Activated CD4-positive, alpha-beta T cell treated with anti-CD3 and anti-CD28 coated beads for 36 hours (primary cell): ENCODE measurements at regions of chr1 and their contacts with region 1.

Region 1: GRCh38 chr1:74733604-74734484 is 892 bp downstream of the TYW3 start:
- DNase-seq: peak; percentile 60
- ATAC-seq: peak; percentile 65
- H3K4me3 Mint-ChIP-seq: peak overlapping the region; percentile 95
- H3K27ac Mint-ChIP-seq: peak overlapping the region; percentile 99
- H3K4me1 Mint-ChIP-seq: peaks cover 47% of the 10 kb centered on the region
- H3K27me3 Mint-ChIP-seq: no peaks in the 10 kb centered on the region

Region 2: GRCh38 chr1:74197657-74198552 is 535.9 kb before region 1 on chr1 and contains the starts of genes FPGT and LRRIQ3:
- CTCF ChIA-PET with region 1: no interaction called
- POLR2A ChIA-PET with region 1: no interaction called
- intact Hi-C with region 1: loop called (anchors 2 kb)
- DNase-seq: peak; percentile 97
- ATAC-seq: peak; percentile 96
- H3K4me3 Mint-ChIP-seq: peak within 1 kb of the TSS; percentile 85
- H3K27ac Mint-ChIP-seq: peak within 1 kb of the TSS; percentile 95
- H3K4me1 Mint-ChIP-seq: peaks cover 15% of the 10 kb centered on the region
- H3K27me3 Mint-ChIP-seq: no peaks in the 10 kb centered on the region
- total RNA-seq, gene FPGT: 12.5 to 13.9 TPM
- total RNA-seq, gene LRRIQ3: 1.9 to 2.7 TPM

Region 3: GRCh38 chr1:74712881-74713280 is 21.0 kb before region 1 on chr1:
- CTCF ChIA-PET with region 1: interaction called, 12 read pairs
- POLR2A ChIA-PET with region 1: no interaction called
- intact Hi-C with region 1: no loop called
- DNase-seq: no peak
- ATAC-seq: no peak
- H3K4me3 Mint-ChIP-seq: no peak overlapping the region
- H3K27ac Mint-ChIP-seq: no peak overlapping the region
- H3K4me1 Mint-ChIP-seq: no peaks in the 10 kb centered on the region
- H3K27me3 Mint-ChIP-seq: no peaks in the 10 kb centered on the region

Region 4: GRCh38 chr1:74763807-74764206 is 30.0 kb after region 1 on chr1:
- CTCF ChIA-PET with region 1: interaction called, 4 read pairs
- POLR2A ChIA-PET with region 1: no interaction called
- intact Hi-C with region 1: loop called in 1 of 2 experiments (anchors 2 kb)
- DNase-seq: no peak
- ATAC-seq: peak; percentile 89
- H3K4me3 Mint-ChIP-seq: no peak overlapping the region
- H3K27ac Mint-ChIP-seq: peak overlapping the region; percentile 67
- H3K4me1 Mint-ChIP-seq: peaks cover 22% of the 10 kb centered on the region
- H3K27me3 Mint-ChIP-seq: no peaks in the 10 kb centered on the region

Region 5: DNA sequence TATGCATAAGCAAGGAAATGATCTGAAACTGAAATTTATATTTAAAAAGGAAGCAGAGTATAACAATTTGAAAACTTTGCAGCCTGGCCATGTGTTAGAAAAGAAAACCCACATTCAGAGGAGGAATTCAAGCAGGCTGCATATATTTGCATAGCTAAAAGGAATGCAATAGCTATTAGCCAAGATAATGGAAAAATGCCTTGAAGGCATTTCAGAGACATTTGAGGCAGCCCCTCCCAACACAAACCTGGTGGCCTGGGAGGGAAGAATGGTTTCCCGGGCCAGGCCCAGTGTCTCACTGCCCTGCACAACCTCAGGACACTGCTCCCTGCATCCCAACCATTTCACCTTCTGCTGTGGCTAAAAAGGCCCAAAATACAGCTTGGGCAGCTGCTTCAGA is 135.9 kb after region 1 on chr1:
- CTCF ChIA-PET with region 1: no interaction called
- POLR2A ChIA-PET with region 1: no interaction called
- intact Hi-C with region 1: no loop called
- DNase-seq: no peak
- ATAC-seq: no peak
- H3K4me3 Mint-ChIP-seq: no peak overlapping the region
- H3K27ac Mint-ChIP-seq: no peak overlapping the region
- H3K4me1 Mint-ChIP-seq: no peaks in the 10 kb centered on the region
- H3K27me3 Mint-ChIP-seq: no peaks in the 10 kb centered on the region

Region 6: GRCh38 chr1:75785983-75786853 is 1052.4 kb after region 1 on chr1 and contains the start of gene RABGGTB:
- CTCF ChIA-PET with region 1: no interaction called
- POLR2A ChIA-PET with region 1: no interaction called
- intact Hi-C with region 1: loop called in 1 of 2 experiments (anchors 10 kb)
- DNase-seq: peak; percentile 97
- ATAC-seq: peak; percentile 94
- H3K4me3 Mint-ChIP-seq: peak within 1 kb of the TSS; percentile 100
- H3K27ac Mint-ChIP-seq: peak within 1 kb of the TSS; percentile 99
- H3K4me1 Mint-ChIP-seq: peaks cover 30% of the 10 kb centered on the region
- H3K27me3 Mint-ChIP-seq: peaks cover 2% of the 10 kb centered on the region
- total RNA-seq, gene RABGGTB: 121 to 190 TPM